Ascending aorta (tissue), 2 donors: ENCODE measurements at regions of chr5 and their contacts with region 1.

Region 1: DNA sequence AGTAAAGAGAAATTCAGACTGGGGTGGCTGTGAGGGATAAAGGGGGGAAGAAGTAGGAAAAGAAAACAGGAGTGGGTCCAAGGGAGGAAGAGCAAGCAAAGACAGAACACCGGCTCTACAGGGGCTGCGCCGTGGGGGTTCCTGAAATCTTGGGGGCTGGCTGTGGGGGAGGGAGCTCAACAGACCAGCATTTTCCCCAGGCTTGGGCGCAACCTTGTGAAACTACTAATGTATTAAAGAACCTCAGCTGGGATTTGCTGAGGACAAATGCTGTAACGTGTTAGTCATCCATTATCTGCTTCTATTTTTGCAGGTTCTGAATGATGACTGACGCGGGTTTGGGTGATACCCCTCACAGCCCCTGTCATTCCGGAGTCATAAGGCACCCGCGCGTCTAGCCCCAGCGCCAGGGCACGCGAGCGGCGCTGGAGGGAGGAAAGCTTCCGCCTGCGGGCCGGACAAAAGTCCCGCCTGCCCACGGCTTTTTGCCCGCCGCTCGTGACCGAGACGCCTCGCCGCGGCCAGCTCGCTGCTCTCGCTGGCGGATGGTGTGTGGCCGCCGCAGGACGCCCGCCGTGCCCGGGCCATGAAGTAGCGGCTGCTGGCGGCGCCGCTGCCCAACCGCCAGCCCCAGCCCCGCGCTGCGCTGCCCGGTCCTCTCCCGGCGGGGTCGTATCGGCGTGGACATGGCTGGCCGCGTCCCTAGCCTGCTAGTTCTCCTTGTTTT is 110.6 kb downstream of the PAM start:
- DNase-seq: peak; percentile 34 to 85
- H3K4me3 ChIP-seq: peak overlapping the region; percentile 71 to 73
- H3K27ac ChIP-seq: peak overlapping the region; percentile 92 to 96
- H3K4me1 ChIP-seq: peaks cover 0 to 37% of the 10 kb centered on the region in 2 donors
- H3K27me3 ChIP-seq: no peaks in the 10 kb centered on the region
- CTCF ChIP-seq: no peak

Region 2: DNA sequence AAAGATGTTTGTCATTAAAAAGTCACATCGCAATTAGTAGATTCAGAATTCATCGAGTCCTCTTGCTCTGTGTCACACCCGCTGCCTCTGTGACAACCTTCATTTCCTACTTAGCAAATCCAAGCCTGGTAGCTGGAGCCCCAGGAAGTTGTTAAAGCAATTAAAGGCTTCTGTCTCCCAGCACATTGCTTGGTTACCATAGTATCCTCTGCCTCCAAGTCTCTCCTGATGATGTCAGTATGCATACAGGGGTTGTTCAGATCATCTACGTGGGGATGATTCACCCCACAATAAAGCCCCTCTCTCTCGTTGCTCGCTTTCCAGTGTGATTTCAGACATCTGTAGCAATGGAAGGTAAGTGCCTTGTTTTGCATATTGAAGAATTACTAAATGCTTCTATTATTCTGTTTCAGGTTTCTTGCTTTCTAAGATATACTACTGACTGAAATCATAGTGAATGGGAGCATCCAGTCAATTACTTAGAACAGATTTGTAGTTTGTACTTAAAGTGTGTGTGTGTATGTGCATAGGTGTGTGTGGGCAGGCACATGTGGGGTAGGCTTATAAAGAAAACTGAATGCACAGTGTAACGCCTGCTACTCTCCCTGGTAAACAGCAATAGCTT is 57.7 kb before region 1 on chr5:
- intact Hi-C with region 1: loop called (anchors 10 kb)
- DNase-seq: no peak
- H3K4me3 ChIP-seq: no peak overlapping the region
- H3K27ac ChIP-seq: peak overlapping the region; percentile 28 to 50
- H3K4me1 ChIP-seq: peaks cover 6 to 22% of the 10 kb centered on the region in 2 donors
- H3K27me3 ChIP-seq: no peaks in the 10 kb centered on the region
- CTCF ChIP-seq: no peak

Region 3: GRCh38 chr5:102823441-102823874 is 42.2 kb before region 1 on chr5:
- intact Hi-C with region 1: loop called (anchors 5 kb)
- DNase-seq: no peak
- H3K4me3 ChIP-seq: no peak overlapping the region
- H3K27ac ChIP-seq: peak overlapping the region in 1 of 2 donors; percentile 24
- H3K4me1 ChIP-seq: peaks cover 4 to 10% of the 10 kb centered on the region in 2 donors
- H3K27me3 ChIP-seq: no peaks in the 10 kb centered on the region
- CTCF ChIP-seq: no peak

Region 4: DNA sequence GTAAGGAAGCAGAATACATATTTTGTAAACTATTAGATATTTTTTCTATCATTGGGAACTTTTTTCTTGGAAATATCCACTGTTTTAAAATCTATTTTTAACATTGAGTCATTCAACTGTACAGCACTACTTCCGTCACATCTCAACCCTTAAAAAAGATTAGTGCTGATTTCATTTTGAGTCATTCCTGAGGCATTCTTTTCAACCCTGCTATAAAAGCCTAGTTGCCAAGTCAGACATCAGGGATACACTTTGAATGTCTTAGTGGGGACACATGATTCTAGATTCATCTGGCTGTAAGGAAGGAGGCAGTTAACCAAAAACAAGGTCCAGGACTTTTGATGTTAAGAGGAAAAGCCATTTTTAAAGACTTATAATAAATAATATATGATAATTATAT is 93.4 kb after region 1 on chr5:
- intact Hi-C with region 1: loop called (anchors 5 kb)
- DNase-seq: no peak
- H3K4me3 ChIP-seq: no peak overlapping the region
- H3K27ac ChIP-seq: peak overlapping the region; percentile 64 to 76
- H3K4me1 ChIP-seq: peaks cover 0 to 29% of the 10 kb centered on the region in 2 donors
- H3K27me3 ChIP-seq: no peaks in the 10 kb centered on the region
- CTCF ChIP-seq: no peak